ENCODE measurements at regions of chr1 and their contacts with region 1.

Region 1: DNA sequence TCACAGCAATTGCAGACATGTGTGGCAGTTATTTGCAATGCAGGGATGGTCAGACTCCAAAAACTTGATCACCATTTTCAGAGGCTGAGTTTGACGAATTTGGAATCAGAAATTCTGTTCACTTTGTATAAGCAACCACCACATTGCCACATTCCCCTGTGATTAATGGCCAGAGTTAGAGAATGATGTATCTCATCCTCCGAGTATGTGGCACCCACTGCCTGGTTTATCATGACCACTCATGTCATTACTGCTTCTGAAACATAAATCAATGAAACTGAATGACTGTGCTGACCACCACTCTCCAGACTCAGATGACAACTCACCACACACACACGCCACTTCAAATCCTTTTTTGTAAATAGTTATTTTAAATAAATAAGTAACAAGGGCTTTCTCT is 66.6 kb upstream of the CACHD1 start:
- DNase-seq: no peak
- H3K4me3 ChIP-seq: no peak overlapping the region
- CTCF ChIP-seq: no peak

Region 2: GRCh38 chr1:64282354-64282753 is 121.0 kb before region 1 on chr1:
- in situ Hi-C with region 1: loop called (anchors 10 kb)
- DNase-seq: no peak
- H3K4me3 ChIP-seq: no peak overlapping the region
- CTCF ChIP-seq: no peak

Region 3: GRCh38 chr1:64440183-64440826 is 37.0 kb after region 1 on chr1:
- in situ Hi-C with region 1: loop called (anchors 5 kb)
- DNase-seq: no peak
- H3K4me3 ChIP-seq: no peak overlapping the region
- CTCF ChIP-seq: no peak

Measured in astrocyte of the cerebellum (primary cell).